Activated CD8-positive, alpha-beta memory T cell treated with anti-CD3 and anti-CD28 coated beads, Interleukin-2, amount 10 ng/mL, durations not matched to agents 7 days and 5 days (primary cell): ENCODE measurements at regions of chr6 and their contacts with region 1.

Region 1: GRCh38 chr6:159042003-159042825 is 2.6 kb downstream of the TAGAP start:
- DNase-seq: peak; percentile 90
- ATAC-seq: peak; percentile 52
- H3K4me3 Mint-ChIP-seq: peak overlapping the region; percentile 95
- H3K27ac Mint-ChIP-seq: peak overlapping the region; percentile 97
- H3K4me1 Mint-ChIP-seq: peaks cover 63% of the 10 kb centered on the region
- H3K27me3 Mint-ChIP-seq: no peaks in the 10 kb centered on the region

Region 2: DNA sequence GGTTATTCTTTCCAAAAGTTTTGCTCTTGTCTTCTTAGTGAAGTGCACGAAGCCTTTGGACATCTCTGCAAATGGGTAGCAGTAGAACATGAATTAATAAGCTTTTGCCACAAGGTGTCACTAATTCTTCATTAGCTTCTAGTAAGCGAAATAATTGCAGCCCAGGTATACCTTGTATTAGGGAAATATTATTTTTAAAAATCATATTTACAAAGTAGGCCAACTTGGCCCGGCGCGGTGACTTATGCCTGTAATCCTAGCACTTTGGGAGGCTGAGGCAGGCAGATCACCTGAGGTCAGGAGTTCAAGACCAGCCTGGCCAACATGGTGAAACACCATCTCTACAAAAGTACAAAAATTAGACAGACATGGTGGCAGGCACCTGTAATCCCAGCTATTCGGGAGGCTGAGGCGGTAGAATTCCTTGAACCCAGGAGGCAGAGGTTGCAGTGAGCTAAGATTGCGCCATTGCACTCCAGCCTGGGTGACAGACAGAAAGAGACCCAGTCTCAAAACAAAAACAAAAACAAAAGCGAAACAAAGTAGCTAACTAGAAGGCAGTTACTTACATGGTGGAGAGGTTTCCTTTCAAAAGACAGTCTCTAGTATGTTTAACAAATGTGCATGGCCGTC is 33.4 kb before region 1 on chr6:
- CTCF ChIA-PET with region 1: interaction called, 67 read pairs
- DNase-seq: no peak
- ATAC-seq: peak; percentile 84
- H3K4me3 Mint-ChIP-seq: peak overlapping the region; percentile 62
- H3K27ac Mint-ChIP-seq: peak overlapping the region; percentile 82
- H3K4me1 Mint-ChIP-seq: peaks cover 36% of the 10 kb centered on the region
- H3K27me3 Mint-ChIP-seq: no peaks in the 10 kb centered on the region

Region 3: DNA sequence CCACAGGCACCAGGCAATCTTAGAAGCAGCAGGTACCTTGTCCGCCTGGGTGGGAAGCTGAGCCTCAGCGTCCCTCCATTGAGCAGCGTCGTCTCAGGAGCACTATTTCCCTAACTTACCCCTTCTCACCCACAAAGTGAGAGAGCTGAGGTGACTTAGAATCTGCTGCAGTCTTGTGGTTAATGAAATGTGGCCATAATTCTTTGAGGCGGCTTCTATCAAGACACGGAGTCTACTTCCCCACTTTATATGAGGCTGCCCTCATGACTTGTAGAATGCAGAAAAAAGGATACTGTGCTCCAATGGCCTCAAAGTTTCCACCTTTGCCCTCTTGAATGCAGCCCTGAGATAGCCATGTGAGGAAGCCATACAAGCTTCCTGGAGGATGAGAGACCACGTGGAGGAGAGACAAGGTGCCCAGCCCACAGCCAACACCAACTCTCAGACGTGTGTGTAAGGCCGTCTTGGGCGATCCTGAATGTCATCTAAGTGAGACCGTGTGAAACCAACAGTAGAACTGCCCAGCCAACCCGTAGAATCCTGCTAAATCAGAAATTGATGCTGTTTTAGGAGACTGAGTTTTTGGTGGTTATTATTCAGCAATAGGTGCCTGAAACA is 11.7 kb after region 1 on chr6:
- CTCF ChIA-PET with region 1: interaction called, 42 read pairs
- DNase-seq: no peak
- ATAC-seq: peak; percentile 50
- H3K4me3 Mint-ChIP-seq: no peak overlapping the region
- H3K27ac Mint-ChIP-seq: peak overlapping the region; percentile 17
- H3K4me1 Mint-ChIP-seq: peaks cover 58% of the 10 kb centered on the region
- H3K27me3 Mint-ChIP-seq: no peaks in the 10 kb centered on the region

Region 4: GRCh38 chr6:159062564-159062945 is 20.3 kb after region 1 on chr6:
- CTCF ChIA-PET with region 1: interaction called, 42 read pairs
- DNase-seq: peak; percentile 88
- ATAC-seq: peak; percentile 86
- H3K4me3 Mint-ChIP-seq: peak overlapping the region; percentile 55
- H3K27ac Mint-ChIP-seq: peak overlapping the region; percentile 99
- H3K4me1 Mint-ChIP-seq: peaks cover 92% of the 10 kb centered on the region
- H3K27me3 Mint-ChIP-seq: peaks cover 2% of the 10 kb centered on the region

Region 5: DNA sequence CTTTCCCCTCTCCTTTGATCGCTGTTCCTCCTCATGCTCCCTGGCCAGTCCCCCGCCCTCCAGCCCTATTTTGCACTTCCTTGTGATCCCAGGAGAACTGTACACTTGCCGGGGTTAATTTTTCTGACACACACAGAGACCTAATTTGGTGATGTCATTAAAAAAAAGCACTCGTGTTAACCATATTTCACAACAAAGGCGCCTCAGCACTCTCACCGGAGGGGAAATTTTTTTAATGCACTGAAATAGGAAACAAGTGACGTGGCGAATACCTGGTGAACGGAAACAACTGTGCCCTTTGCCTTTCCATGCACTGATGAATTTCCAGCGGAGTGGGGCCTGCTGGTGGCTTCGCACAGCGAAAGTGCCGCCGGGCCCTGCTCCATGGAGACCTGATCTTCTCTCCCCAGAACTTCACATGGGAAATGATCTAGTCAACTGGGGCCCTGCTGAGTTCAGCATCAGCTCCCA is 56.5 kb after region 1 on chr6:
- CTCF ChIA-PET with region 1: interaction called, 198 read pairs
- DNase-seq: peak; percentile 69
- ATAC-seq: peak; percentile 70
- H3K4me3 Mint-ChIP-seq: peak overlapping the region; percentile 18
- H3K27ac Mint-ChIP-seq: peak overlapping the region; percentile 82
- H3K4me1 Mint-ChIP-seq: peaks cover 57% of the 10 kb centered on the region
- H3K27me3 Mint-ChIP-seq: no peaks in the 10 kb centered on the region

Region 6: GRCh38 chr6:159110013-159110412 is 67.8 kb after region 1 on chr6:
- CTCF ChIA-PET with region 1: interaction called, 198 read pairs
- DNase-seq: peak; percentile 58
- ATAC-seq: no peak
- H3K4me3 Mint-ChIP-seq: no peak overlapping the region
- H3K27ac Mint-ChIP-seq: no peak overlapping the region
- H3K4me1 Mint-ChIP-seq: peaks cover 57% of the 10 kb centered on the region
- H3K27me3 Mint-ChIP-seq: no peaks in the 10 kb centered on the region